ENCODE measurements at regions of chr7 and their contacts with region 1.

Region 1: DNA sequence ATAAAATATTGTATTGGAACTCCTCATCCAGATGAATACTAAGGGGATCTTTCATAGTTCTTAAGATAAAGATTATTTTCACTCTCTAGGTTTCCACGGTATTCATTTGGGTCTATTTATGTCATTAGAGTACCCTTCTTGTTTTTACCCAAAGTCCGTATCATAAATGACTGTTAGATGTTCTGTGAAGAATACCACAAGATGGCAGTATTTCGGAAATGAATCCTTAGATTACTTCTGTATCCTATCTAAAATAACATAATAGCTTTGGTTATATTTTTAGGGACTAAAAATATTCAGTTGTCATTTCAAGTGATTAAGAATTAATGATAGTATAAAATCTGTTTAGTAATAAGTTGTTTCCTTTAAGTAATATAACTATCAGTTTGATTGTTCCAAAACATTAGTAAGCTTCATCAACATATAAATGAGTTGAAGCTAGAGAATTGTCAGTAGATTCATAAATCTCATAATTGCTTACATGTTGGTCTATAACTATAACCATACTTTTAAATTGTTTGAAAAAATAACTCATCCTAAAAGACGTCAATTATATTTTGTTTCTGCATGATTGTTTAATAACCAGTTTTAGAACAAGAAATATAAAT is 337.5 kb upstream of the KCND2 start:
- DNase-seq: no peak
- H3K4me3 Mint-ChIP-seq: no peak overlapping the region
- H3K27ac Mint-ChIP-seq: no peak overlapping the region
- H3K4me1 Mint-ChIP-seq: no peaks in the 10 kb centered on the region
- H3K27me3 Mint-ChIP-seq: no peaks in the 10 kb centered on the region

Region 2: GRCh38 chr7:119711104-119711503 is 224.4 kb before region 1 on chr7:
- CTCF ChIA-PET with region 1: no interaction called
- intact Hi-C with region 1: no loop called
- DNase-seq: no peak
- H3K4me3 Mint-ChIP-seq: no peak overlapping the region
- H3K27ac Mint-ChIP-seq: no peak overlapping the region
- H3K4me1 Mint-ChIP-seq: no peaks in the 10 kb centered on the region
- H3K27me3 Mint-ChIP-seq: no peaks in the 10 kb centered on the region

Region 3: DNA sequence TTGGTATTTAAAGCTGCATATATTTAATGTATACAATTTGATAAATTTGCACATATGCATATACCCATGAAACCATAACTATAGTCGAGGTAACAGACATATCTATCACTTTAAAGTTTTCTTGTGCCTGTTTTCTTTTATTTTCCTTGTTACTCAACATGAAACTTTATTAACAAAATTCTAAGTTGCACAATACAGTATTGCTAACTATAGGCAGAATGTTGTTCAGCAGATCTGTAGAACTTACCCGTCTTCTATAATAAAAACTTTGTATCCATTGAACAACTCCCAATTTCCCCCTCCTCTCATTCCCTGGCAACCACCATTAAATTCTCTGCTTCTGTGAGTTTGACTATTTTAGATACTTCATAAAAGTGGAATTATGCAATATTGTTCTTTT is 67.1 kb before region 1 on chr7:
- CTCF ChIA-PET with region 1: no interaction called
- intact Hi-C with region 1: no loop called
- DNase-seq: no peak
- H3K4me3 Mint-ChIP-seq: no peak overlapping the region
- H3K27ac Mint-ChIP-seq: no peak overlapping the region
- H3K4me1 Mint-ChIP-seq: no peaks in the 10 kb centered on the region
- H3K27me3 Mint-ChIP-seq: no peaks in the 10 kb centered on the region

Region 4: DNA sequence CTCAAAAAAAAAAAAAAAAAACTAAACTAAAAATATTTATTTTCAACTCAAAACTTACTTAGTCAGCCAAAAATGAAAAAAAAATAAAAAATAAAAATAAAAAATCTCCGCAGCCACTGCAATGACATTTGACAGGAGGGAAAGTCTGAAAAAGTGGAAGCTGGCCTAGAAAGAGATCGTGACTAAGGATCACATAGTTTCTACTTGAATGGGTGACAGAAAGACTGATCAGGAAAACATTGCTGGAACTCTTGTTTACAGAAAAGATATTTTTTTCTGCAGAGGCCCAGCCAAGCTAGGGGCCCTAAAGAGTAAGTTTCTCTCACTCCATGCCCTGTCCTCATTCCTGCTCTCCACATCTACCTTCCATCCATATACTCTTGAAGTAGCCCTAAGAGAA is 244.7 kb after region 1 on chr7:
- CTCF ChIA-PET with region 1: no interaction called
- intact Hi-C with region 1: no loop called
- DNase-seq: no peak
- H3K4me3 Mint-ChIP-seq: no peak overlapping the region
- H3K27ac Mint-ChIP-seq: no peak overlapping the region
- H3K4me1 Mint-ChIP-seq: no peaks in the 10 kb centered on the region
- H3K27me3 Mint-ChIP-seq: no peaks in the 10 kb centered on the region

Region 5: DNA sequence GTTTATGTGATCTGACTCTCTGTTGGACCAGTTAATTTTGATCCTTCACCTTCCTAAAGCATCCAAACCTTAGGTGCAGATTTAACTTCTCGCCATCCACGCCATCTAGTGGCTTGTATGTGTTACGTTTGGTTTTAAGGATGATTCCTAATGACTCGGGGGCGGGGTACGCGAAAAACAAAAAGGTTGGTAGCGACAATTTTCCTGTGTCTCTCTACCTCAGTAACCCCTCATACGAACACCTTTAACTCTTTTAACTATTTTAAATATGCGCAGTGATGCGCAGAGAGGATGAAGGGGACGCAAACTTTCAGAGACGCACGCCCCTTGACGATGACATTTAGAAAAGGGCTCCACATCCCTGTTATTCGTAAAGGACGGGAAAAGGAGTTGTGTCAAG is 336.7 kb after region 1 on chr7:
- CTCF ChIA-PET with region 1: no interaction called
- intact Hi-C with region 1: loop called (anchors 5 kb)
- DNase-seq: no peak
- H3K4me3 Mint-ChIP-seq: no peak overlapping the region
- H3K27ac Mint-ChIP-seq: no peak overlapping the region
- H3K4me1 Mint-ChIP-seq: peaks cover 10% of the 10 kb centered on the region
- H3K27me3 Mint-ChIP-seq: peaks cover 40% of the 10 kb centered on the region

Region 6: GRCh38 chr7:120554960-120555571 is 619.5 kb after region 1 on chr7:
- CTCF ChIA-PET with region 1: no interaction called
- intact Hi-C with region 1: loop called (anchors 1 kb)
- DNase-seq: peak; percentile 19
- H3K4me3 Mint-ChIP-seq: no peak overlapping the region
- H3K27ac Mint-ChIP-seq: no peak overlapping the region
- H3K4me1 Mint-ChIP-seq: no peaks in the 10 kb centered on the region
- H3K27me3 Mint-ChIP-seq: no peaks in the 10 kb centered on the region

Region 7: DNA sequence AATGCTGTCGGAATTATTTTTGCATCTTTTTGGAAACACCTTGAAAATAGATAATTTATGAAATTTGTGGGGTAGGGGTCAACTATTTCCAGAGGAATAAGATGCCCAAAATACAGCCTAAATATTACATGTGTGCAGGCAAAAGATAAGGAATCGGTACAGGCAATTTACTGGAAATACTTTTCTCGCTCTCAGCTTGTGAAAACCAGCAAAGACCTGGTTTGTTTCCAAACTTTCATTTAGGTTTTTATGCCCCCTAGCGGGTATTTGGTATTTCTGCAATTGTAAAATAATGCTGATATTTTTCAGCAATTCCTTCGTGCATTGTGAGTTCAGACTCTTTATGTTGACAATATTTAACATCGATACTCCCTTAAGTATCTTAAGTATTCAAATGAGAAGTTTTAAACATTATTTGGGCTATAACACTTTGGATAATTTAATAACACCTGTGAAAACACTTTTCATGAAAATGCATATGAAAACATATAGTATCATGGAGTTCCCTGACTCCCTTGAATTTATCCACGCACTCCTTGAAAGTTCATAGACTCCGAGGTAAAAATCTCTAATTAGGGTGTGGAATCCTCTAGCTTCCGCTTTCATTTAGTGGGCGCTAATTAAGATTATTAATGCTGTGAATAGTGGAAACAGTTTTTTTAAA is 790.0 kb after region 1 on chr7:
- CTCF ChIA-PET with region 1: no interaction called
- intact Hi-C with region 1: loop called (anchors 1 kb)
- DNase-seq: no peak
- H3K4me3 Mint-ChIP-seq: no peak overlapping the region
- H3K27ac Mint-ChIP-seq: no peak overlapping the region
- H3K4me1 Mint-ChIP-seq: no peaks in the 10 kb centered on the region
- H3K27me3 Mint-ChIP-seq: peaks cover 5% of the 10 kb centered on the region

Measured in activated naive CD4-positive, alpha-beta T cell treated with anti-CD3 and anti-CD28 coated beads for 36 hours (primary cell).